RWPE1 (cell line): ENCODE measurements at regions of chr19 and their contacts with region 1.

Region 1: DNA sequence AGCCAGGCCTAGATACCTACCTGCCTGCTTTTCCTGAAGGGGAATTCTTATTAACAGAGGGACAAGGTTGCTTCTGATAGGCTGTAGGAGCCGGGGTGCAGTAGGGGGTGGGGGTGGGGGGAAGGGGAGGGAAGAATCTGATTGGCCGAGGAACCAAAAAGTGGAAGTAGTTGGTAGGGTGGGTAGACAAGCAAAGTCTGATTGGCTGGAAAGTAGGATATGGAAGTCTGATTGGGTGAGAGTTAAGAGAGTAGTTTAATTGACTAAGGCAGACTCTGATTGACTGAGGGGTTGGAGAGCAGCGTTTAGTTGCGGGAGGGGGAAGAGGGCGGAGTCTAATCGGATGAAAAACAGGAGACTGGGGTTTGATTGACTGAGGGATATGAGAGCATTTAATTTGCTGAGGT is 9.4 kb upstream of the CYP4F22 start:
- DNase-seq: peak; percentile 20
- H3K27ac ChIP-seq: no peak overlapping the region
- CTCF ChIP-seq: no peak

Region 2: DNA sequence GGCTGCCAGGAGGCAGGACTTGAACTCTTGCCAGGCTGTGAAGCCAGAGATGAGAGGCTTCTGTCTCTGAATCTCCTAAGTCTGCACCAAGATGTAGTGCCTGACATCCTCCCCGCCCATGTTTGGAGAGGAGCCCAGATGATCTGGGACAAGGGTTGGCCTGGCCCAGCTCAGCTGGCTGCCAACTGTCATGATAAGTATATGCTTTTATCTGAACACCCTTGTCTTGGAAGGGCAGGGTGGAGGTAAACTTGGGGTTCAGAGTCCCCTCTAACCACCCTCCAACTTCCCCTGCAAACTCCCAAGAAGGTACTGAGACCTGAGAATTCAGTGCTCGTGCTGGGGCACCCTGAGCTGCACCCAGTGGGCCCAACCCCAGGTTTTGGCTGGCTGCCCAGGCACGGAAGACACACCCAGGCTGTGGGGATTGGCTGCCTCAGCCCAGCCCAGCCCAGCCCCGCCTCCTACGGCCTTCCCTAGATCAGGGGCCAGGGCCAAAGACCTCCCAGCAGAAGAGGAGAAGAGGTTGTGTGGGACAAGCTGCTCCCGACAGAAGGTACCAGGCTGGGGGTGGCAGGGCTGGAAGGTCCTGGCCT is 173.8 kb after region 1 on chr19 and contains the start of gene CYP4F12:
- CTCF ChIA-PET with region 1: no interaction called
- POLR2A ChIA-PET with region 1: interaction called, 10 read pairs
- DNase-seq: peak; percentile 60
- H3K27ac ChIP-seq: peak within 1 kb of the TSS; percentile 90
- CTCF ChIP-seq: no peak